B cell (primary cell): ENCODE measurements at regions of chr15 and their contacts with region 1.

Region 1: DNA sequence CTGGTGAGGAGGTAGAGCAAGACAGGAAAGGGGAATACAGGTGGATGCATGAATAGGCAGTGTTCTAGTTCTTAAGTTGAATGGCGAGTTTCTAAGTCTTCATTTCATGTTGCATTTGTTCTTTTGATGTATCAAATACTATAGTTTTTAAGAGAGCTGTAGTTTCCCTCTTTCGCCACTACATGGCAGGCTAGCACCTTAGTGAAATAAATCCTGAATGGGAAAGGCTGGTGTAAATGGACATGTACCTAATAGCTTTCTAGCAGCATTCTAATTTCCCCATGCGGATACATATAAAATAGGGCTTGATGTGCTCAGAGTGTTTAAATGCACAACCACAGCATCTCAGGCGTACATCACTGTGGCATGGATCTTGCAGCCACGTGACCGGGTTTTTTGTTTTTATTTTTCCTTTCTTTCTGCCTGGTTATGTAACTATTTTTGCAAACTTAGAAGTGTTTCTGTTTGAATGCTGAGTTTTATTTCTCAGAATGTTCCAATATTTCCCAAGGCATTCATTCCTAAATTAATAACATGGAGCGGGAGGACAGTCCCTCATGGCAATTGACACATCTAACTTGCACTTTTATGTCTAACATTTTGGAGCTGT is 23.5 kb upstream of the CLN6 start:
- DNase-seq: peak; percentile 62
- ATAC-seq: peak; percentile 65
- H3K4me3 ChIP-seq: no peak overlapping the region
- H3K4me3 Mint-ChIP-seq: no peak overlapping the region
- H3K27ac ChIP-seq: no peak overlapping the region
- H3K27ac Mint-ChIP-seq: no peak overlapping the region
- H3K4me1 ChIP-seq: peaks cover 10 to 12% of the 10 kb centered on the region in 2 donors
- H3K4me1 Mint-ChIP-seq: peaks cover 4% of the 10 kb centered on the region
- H3K27me3 ChIP-seq: peaks cover 0 to 17% (median 6%) of the 10 kb centered on the region in 4 experiments
- H3K27me3 Mint-ChIP-seq: peaks cover 17% of the 10 kb centered on the region
- CTCF ChIP-seq: peak; percentile 91

Region 2: DNA sequence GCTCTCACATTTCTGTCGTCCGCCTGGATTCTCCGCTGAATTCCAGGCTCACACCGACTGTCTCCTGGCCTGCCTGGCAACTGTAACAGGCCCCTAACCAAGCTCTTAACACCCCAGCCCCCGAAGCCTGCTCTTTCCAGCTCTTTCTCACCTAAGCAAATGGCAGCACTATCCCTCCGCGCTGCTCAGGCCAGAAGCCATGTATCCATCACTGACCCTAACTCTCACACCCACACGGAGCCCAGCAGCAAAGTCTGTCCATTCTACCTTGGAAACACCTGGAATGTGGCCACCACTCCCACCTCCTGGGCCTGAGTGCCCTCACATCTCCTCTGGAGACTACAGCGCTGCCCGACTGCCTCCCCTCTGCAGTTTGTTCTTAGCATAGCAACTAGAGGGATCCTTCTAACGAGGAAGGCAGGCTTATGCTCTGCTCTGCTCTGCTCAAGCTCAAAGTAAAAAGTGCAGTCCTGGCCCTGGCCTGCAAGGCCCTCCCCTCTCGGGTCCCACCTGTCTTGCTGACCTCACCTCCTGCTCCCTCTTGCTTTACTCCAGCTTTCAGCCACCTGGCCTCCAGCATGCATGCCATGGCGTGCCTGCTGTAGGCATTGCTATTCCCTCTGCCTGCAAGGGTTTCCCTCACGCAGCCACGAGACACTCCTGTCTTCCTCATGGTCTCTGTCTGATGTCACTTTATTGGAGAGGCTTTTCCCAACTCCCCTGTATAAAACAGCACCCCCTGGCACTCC is 51.7 kb after region 1 on chr15:
- CTCF ChIA-PET with region 1: interaction called, 35 read pairs
- POLR2A ChIA-PET with region 1: no interaction called
- intact Hi-C with region 1: loop called (anchors 2 kb)
- DNase-seq: no peak
- ATAC-seq: no peak
- H3K4me3 ChIP-seq: no peak overlapping the region
- H3K4me3 Mint-ChIP-seq: no peak overlapping the region
- H3K27ac ChIP-seq: no peak overlapping the region
- H3K27ac Mint-ChIP-seq: no peak overlapping the region
- H3K4me1 ChIP-seq: peaks cover 5 to 6% of the 10 kb centered on the region in 2 donors
- H3K4me1 Mint-ChIP-seq: peaks cover 9% of the 10 kb centered on the region
- H3K27me3 ChIP-seq: no peaks in the 10 kb centered on the region
- H3K27me3 Mint-ChIP-seq: peaks cover 9% of the 10 kb centered on the region
- CTCF ChIP-seq: no peak

Region 3: GRCh38 chr15:68383161-68384074 is 130.4 kb after region 1 on chr15:
- CTCF ChIA-PET with region 1: interaction called, 31 read pairs
- POLR2A ChIA-PET with region 1: no interaction called
- intact Hi-C with region 1: no loop called
- DNase-seq: peak; percentile 57
- ATAC-seq: peak; percentile 60
- H3K4me3 ChIP-seq: no peak overlapping the region
- H3K4me3 Mint-ChIP-seq: no peak overlapping the region
- H3K27ac ChIP-seq: no peak overlapping the region
- H3K27ac Mint-ChIP-seq: no peak overlapping the region
- H3K4me1 ChIP-seq: peaks cover 6 to 9% of the 10 kb centered on the region in 2 donors
- H3K4me1 Mint-ChIP-seq: peaks cover 10% of the 10 kb centered on the region
- H3K27me3 ChIP-seq: peaks cover 0 to 2% (median 0%) of the 10 kb centered on the region in 4 experiments
- H3K27me3 Mint-ChIP-seq: peaks cover 5% of the 10 kb centered on the region
- CTCF ChIP-seq: peak; percentile 77

Region 4: DNA sequence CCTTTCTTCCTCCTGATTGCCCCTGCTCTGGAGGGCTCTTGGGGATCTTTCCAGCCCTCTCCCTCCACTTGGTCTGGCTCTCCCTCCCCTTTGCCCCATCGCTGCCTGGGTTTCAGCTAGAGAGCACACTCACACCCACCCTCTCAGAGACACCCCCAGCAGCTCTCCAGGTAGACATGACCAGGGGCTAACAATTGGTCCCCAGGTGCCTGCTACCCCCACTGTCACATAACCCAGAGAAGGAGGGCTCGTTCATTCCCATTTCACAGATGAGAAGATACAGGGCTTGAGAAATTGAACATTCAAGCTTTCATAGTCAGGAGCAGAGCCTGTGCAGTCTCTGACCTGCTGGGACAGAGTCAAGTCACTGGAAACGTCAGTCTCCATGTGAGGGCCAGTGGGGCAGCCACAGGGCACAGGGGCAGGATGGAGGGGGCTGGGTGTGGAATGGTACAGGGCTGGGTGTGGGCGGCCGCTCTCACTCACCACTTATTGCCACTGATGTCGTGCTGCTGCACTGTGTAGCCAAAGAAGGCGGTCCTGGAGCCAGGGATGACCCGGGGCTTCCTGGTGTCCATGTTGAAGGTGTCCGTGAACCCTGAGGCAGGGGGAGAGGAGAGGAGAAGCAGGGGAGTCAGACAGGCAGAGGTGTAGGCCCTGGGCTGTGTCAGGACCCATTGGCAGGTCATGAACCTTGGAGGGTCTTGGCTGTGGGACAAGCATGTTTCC is 149.6 kb after region 1 on chr15:
- CTCF ChIA-PET with region 1: no interaction called
- POLR2A ChIA-PET with region 1: no interaction called
- intact Hi-C with region 1: no loop called
- DNase-seq: no peak
- ATAC-seq: no peak
- H3K4me3 ChIP-seq: no peak overlapping the region
- H3K4me3 Mint-ChIP-seq: no peak overlapping the region
- H3K27ac ChIP-seq: no peak overlapping the region
- H3K27ac Mint-ChIP-seq: no peak overlapping the region
- H3K4me1 ChIP-seq: no peaks in the 10 kb centered on the region
- H3K4me1 Mint-ChIP-seq: no peaks in the 10 kb centered on the region
- H3K27me3 ChIP-seq: no peaks in the 10 kb centered on the region
- H3K27me3 Mint-ChIP-seq: no peaks in the 10 kb centered on the region
- CTCF ChIP-seq: no peak

Region 5: GRCh38 chr15:68691705-68692104 is 438.7 kb after region 1 on chr15:
- CTCF ChIA-PET with region 1: no interaction called
- POLR2A ChIA-PET with region 1: no interaction called
- intact Hi-C with region 1: no loop called
- DNase-seq: no peak
- ATAC-seq: no peak
- H3K4me3 ChIP-seq: no peak overlapping the region
- H3K4me3 Mint-ChIP-seq: no peak overlapping the region
- H3K27ac ChIP-seq: no peak overlapping the region
- H3K27ac Mint-ChIP-seq: no peak overlapping the region
- H3K4me1 ChIP-seq: no peaks in the 10 kb centered on the region
- H3K4me1 Mint-ChIP-seq: no peaks in the 10 kb centered on the region
- H3K27me3 ChIP-seq: no peaks in the 10 kb centered on the region
- H3K27me3 Mint-ChIP-seq: peaks cover 8% of the 10 kb centered on the region
- CTCF ChIP-seq: no peak

Region 6: DNA sequence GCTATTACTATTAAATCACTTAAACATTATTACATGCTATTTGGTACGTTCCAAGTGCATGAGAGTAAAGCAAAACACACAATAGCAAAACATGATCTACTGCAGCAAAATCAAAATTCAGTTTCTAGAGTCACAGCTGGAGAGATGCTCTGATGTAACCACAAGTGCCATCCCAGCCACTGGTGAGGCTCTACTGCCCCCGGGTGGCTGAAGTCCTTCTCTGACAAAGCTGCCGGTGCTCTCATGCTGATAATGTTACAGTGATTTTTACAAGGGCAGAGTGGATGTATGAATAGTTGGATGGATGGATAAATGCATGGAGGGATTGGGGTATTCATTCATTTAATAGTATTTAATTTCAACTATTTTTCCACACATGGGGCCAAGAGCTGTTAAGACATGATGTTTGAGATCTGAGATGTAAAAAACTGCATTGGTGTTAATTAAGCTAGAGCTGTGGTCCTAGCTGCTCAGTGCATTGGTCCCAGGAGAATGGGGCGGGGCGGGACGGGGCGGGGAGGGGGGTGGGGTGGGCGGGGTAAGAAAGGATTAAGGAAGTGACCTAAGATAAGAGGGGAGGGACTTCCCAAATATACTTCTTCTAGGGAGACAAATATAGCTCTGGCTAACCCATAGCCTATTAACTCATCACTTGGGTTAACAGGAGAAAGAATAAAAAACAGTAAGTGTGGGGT is 672.0 kb after region 1 on chr15:
- CTCF ChIA-PET with region 1: interaction called, 11 read pairs
- POLR2A ChIA-PET with region 1: no interaction called
- intact Hi-C with region 1: loop called (anchors 10 kb)
- DNase-seq: peak; percentile 61
- ATAC-seq: peak; percentile 41
- H3K4me3 ChIP-seq: no peak overlapping the region
- H3K4me3 Mint-ChIP-seq: no peak overlapping the region
- H3K27ac ChIP-seq: no peak overlapping the region
- H3K27ac Mint-ChIP-seq: no peak overlapping the region
- H3K4me1 ChIP-seq: no peaks in the 10 kb centered on the region
- H3K4me1 Mint-ChIP-seq: peaks cover 3% of the 10 kb centered on the region
- H3K27me3 ChIP-seq: no peaks in the 10 kb centered on the region
- H3K27me3 Mint-ChIP-seq: peaks cover 9% of the 10 kb centered on the region
- CTCF ChIP-seq: peak; percentile 76